ENCODE measurements at regions of chr16 and their contacts with region 1.

Region 1: DNA sequence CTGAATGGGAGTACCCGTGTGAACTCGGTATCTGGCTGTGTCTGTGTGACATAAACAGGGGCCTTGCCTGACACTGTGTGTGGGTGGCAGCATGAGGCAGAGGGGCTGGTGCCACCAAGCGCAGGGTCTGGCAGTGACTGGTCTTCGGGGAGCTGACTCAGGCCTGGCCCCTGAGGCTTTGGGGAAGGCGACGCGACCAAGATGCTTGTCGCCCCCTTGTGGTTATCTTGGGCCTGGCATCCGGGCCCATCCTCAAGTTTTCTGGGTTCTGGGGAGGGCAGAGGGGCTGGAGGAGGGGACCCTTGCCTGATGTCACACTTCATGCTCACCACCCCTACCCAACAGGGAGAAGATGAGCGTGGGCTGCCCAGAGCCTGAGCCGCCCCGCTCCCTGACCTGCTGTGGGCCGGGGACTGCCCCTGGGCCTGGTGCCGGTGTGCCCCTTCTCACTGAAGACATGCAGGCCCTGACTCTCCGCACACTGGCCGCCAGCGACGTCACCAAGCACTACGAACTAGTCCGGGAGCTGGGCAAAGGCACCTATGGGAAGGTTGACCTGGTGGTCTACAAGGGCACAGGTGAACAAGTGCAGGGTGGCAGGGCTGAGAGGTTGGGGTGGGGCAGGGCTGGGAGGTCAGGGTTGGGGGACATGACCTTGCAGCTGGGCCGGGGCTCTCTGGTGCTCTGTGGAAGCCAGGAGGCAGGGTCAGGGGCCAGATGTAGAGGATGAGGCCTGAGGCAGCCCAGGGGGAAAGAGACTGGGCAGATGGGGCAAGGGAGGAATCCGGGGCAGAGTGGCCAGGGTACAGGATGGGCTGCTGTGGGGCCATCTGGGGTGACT is 24.9 kb downstream of the SBK1 start:
- DNase-seq: no peak
- ATAC-seq: no peak

Region 2: GRCh38 chr16:28277537-28278388 is 39.5 kb before region 1 on chr16:
- intact Hi-C with region 1: loop called (anchors 2 kb)
- DNase-seq: peak; percentile 96
- ATAC-seq: peak; percentile 90

Measured in Right ventricle myocardium inferior (tissue), 1 donor.